Activated CD4-positive, alpha-beta T cell treated with anti-CD3 and anti-CD28 coated beads for 36 hours (primary cell): ENCODE measurements at regions of chr4 and their contacts with region 1.

Region 1: GRCh38 chr4:104930298-104930697 is 216.4 kb upstream of the TET2 start:
- DNase-seq: no peak
- ATAC-seq: no peak
- H3K4me3 Mint-ChIP-seq: no peak overlapping the region
- H3K27ac Mint-ChIP-seq: no peak overlapping the region
- H3K4me1 Mint-ChIP-seq: peaks cover 31% of the 10 kb centered on the region
- H3K27me3 Mint-ChIP-seq: peaks cover 5% of the 10 kb centered on the region

Region 2: DNA sequence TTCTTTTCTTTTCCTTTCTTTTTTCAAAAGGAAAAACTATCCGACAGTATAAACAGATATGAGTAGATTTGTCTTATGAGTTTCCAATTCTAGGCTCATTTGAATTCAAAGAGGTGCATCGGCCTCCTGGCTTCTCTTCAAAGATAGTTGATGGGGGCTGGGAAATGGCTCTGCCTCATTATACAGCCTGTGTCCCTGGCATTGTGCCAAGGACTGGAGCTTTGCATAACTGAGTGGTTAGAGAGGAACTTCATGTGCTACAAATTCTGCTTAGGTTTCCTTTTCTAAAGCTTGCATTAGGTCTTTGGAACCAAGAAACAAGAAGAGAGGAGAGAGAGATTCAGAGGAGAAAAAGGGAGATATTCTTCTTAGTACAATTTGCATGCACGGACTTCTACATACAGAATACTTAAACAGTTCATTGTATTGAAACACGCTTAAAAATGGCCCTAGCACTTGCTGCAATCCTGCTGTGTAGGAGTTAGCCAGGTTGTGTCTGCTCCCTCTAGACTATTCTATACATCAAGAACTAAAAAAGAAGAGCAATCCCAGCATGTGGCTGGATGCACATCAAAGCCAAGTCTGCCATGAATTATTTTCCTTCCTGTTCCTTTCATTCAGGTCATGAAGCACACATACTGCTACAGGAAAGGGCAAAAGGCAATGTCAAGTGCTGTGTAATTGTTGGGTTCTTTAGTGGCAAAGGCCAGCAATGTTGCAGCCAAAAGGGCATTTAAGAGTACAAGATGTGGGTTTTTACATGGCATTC is 707.3 kb after region 1 on chr4:
- CTCF ChIA-PET with region 1: no interaction called
- POLR2A ChIA-PET with region 1: no interaction called
- intact Hi-C with region 1: loop called in 1 of 2 experiments (anchors 10 kb)
- DNase-seq: peak; percentile 24
- ATAC-seq: no peak
- H3K4me3 Mint-ChIP-seq: no peak overlapping the region
- H3K27ac Mint-ChIP-seq: no peak overlapping the region
- H3K4me1 Mint-ChIP-seq: peaks cover 2% of the 10 kb centered on the region
- H3K27me3 Mint-ChIP-seq: peaks cover 8% of the 10 kb centered on the region